HCT116 (cell line): ENCODE measurements at regions of chr6 and their contacts with region 1.

Region 1: GRCh38 chr6:127092466-127092865 is 26.0 kb upstream of the RSPO3 start:
- DNase-seq: no peak
- ATAC-seq: no peak
- H3K4me3 ChIP-seq: no peak overlapping the region
- H3K27ac ChIP-seq: no peak overlapping the region
- H3K4me1 ChIP-seq: no peaks in the 10 kb centered on the region
- H3K27me3 ChIP-seq: peaks cover 39% of the 10 kb centered on the region
- CTCF ChIP-seq: no peak
- POLR2A ChIP-seq: no peak
- RAD21 ChIP-seq: no peak

Region 2: GRCh38 chr6:127146932-127147331 is 54.5 kb after region 1 on chr6:
- CTCF ChIA-PET with region 1: no interaction called
- POLR2A ChIA-PET with region 1: no interaction called
- RAD21 ChIA-PET with region 1: no interaction called
- intact Hi-C with region 1: no loop called
- DNase-seq: no peak
- ATAC-seq: no peak
- H3K4me3 ChIP-seq: no peak overlapping the region
- H3K27ac ChIP-seq: no peak overlapping the region
- H3K4me1 ChIP-seq: no peaks in the 10 kb centered on the region
- H3K27me3 ChIP-seq: peaks cover 43% of the 10 kb centered on the region
- CTCF ChIP-seq: no peak
- POLR2A ChIP-seq: no peak
- RAD21 ChIP-seq: no peak

Region 3: DNA sequence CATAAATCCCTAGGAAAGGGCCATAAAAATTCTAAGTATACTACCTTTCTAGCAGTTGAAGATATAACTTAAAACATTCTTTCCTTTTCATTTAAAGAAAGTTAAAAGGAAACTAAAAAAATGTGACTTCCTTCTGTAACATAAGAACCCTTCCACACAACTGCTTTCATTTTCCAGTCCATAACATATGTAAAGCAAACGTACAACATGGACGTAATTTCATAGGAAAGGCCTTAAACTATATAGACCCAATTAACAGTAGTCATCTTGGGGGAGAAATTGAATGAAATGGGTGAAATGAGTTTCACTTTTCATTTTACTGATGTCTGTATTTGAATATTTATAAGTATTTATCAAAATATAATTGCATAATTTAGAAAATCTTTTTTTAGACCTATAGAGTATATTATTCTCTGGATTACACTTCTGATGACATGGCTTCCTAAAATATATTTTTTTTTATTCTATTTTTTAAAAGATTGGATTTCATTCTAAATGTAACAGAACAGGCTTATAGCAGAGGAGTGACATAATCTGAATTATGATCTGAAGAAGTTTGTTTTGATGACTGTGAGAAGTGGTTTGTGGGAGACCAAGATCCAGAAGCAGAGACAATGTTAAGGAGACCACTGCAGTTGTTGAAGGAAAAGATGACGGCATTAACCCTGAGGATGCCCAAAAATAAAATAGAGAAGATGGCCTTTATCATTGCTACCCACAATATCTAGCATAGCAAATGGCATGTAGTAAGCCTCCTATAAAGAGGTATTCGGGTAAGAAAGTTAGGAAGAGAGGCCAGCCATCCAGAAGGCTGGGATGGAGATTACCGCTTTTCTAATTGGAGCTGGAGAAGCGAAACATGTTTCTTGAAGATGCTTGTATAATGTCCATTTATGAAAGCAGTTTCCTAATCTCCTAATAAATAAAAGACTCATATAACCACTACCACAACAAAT is 1167.5 kb after region 1 on chr6:
- CTCF ChIA-PET with region 1: no interaction called
- POLR2A ChIA-PET with region 1: no interaction called
- RAD21 ChIA-PET with region 1: no interaction called
- intact Hi-C with region 1: loop called (anchors 10 kb)
- DNase-seq: no peak
- ATAC-seq: no peak
- H3K4me3 ChIP-seq: no peak overlapping the region
- H3K27ac ChIP-seq: no peak overlapping the region
- H3K4me1 ChIP-seq: no peaks in the 10 kb centered on the region
- H3K27me3 ChIP-seq: no peaks in the 10 kb centered on the region
- CTCF ChIP-seq: no peak
- POLR2A ChIP-seq: no peak
- RAD21 ChIP-seq: no peak